Endothelial cell of umbilical vein (primary cell): ENCODE measurements at regions of chr14 and their contacts with region 1.

Region 1: DNA sequence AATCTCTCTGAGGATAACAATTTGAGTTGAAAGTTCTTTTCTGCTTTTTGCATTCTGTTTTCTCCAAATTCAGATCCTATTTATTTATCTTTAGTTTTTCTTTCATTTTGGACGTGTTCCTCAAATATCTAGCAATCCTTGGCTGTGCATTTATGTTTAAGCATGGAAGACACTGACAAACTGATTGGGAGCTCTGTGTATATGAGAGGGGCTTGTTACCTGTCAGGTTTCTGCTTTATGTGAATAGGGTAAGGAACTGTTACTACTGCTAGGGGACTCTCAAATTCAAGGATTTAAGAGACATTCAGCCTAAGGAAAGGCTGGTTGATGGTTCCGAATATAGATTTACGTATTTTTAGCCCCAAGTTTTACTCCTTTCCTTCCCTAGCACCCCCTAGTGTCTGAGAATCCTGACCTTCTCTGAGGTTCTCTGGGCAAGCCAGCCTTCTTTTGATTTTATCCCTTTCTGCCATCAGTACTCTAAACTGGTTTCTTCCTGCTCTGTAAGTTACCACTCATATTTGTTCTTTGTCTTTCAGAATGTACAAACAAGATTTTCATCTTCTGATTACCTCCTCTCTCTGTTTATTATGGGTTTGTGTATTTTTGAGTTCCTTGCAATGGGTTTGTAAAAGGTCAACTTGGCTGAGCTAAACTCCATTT is 30.5 kb downstream of the YLPM1 start:
- DNase-seq: peak; percentile 63
- H3K4me3 ChIP-seq: peak overlapping the region in 1 of 3 experiments; percentile 38
- H3K27ac ChIP-seq: peak overlapping the region; percentile 77
- H3K4me1 ChIP-seq: peaks cover 31% of the 10 kb centered on the region
- H3K27me3 ChIP-seq: no peaks in the 10 kb centered on the region
- CTCF ChIP-seq: peak; percentile 51 to 62
- POLR2A ChIP-seq: no peak

Region 2: GRCh38 chr14:74698465-74698864 is 95.2 kb before region 1 on chr14:
- CTCF ChIA-PET with region 1: no interaction called
- POLR2A ChIA-PET with region 1: no interaction called
- dilution Hi-C with region 1: no loop called
- intact Hi-C with region 1: no loop called
- DNase-seq: no peak
- H3K4me3 ChIP-seq: no peak overlapping the region
- H3K27ac ChIP-seq: no peak overlapping the region
- H3K4me1 ChIP-seq: no peaks in the 10 kb centered on the region
- H3K27me3 ChIP-seq: no peaks in the 10 kb centered on the region
- CTCF ChIP-seq: no peak
- POLR2A ChIP-seq: no peak

Region 3: DNA sequence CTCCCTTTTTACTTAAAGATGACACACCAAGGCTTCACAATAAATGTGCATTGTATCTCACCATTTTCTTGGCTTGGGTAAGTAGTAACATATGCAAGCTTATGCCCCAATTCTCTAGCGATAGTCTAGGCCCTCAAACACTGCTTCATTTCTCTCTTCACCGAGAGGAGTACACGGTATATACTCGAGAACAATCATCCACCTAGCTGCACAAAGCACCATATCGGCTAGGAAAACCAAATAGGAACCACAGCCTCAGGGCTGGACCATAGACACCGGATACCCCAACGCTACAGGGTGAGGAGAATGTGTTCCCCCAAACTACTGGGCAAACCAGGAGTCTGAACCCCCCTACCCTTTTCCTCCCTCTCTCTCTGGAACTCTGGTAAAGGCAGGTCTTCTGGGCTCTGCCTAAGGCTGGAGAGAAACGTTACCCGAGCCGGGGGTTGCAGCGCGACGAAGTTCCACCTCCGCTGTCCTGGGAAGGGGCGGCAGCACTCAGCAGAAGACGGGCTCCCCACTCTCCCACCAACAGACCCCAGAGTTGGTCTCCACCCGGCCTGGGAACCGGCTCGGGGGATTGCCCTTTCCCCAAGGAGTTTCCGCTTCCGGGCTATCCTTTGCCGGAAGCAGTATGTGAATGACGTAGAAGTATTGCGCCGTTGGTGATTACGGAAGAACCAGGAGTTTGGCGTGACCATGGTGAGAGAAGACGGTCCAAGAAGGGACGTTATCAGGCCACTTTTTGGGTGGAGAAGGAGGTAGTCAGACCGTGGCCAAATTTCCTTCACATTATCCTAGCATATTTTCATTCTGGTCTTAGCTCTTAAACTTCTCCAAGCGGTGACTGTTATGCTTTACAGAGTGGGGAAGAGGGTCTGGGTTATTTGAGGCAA is 80.9 kb before region 1 on chr14 and contains the starts of genes AREL1 and FCF1:
- CTCF ChIA-PET with region 1: no interaction called
- POLR2A ChIA-PET with region 1: no interaction called
- dilution Hi-C with region 1: no loop called
- intact Hi-C with region 1: loop called (anchors 5 kb)
- DNase-seq: peak; percentile 87
- H3K4me3 ChIP-seq: peak within 1 kb of the TSS; percentile 66 to 93 (median 92)
- H3K27ac ChIP-seq: peak within 1 kb of the TSS; percentile 37
- H3K4me1 ChIP-seq: peaks cover 15% of the 10 kb centered on the region
- H3K27me3 ChIP-seq: no peaks in the 10 kb centered on the region
- CTCF ChIP-seq: no peak
- POLR2A ChIP-seq: peak; percentile 75
- total RNA-seq, gene AREL1: 46.4 and 50.3 TPM in 2 replicates
- total RNA-seq, gene FCF1: 57.8 and 58.2 TPM in 2 replicates

Region 4: GRCh38 chr14:75018694-75019093 is 225.1 kb after region 1 on chr14:
- CTCF ChIA-PET with region 1: no interaction called
- POLR2A ChIA-PET with region 1: no interaction called
- dilution Hi-C with region 1: no loop called
- intact Hi-C with region 1: no loop called
- DNase-seq: no peak
- H3K4me3 ChIP-seq: no peak overlapping the region
- H3K27ac ChIP-seq: no peak overlapping the region
- H3K4me1 ChIP-seq: peaks cover 3% of the 10 kb centered on the region
- H3K27me3 ChIP-seq: no peaks in the 10 kb centered on the region
- CTCF ChIP-seq: no peak
- POLR2A ChIP-seq: no peak

Region 5: DNA sequence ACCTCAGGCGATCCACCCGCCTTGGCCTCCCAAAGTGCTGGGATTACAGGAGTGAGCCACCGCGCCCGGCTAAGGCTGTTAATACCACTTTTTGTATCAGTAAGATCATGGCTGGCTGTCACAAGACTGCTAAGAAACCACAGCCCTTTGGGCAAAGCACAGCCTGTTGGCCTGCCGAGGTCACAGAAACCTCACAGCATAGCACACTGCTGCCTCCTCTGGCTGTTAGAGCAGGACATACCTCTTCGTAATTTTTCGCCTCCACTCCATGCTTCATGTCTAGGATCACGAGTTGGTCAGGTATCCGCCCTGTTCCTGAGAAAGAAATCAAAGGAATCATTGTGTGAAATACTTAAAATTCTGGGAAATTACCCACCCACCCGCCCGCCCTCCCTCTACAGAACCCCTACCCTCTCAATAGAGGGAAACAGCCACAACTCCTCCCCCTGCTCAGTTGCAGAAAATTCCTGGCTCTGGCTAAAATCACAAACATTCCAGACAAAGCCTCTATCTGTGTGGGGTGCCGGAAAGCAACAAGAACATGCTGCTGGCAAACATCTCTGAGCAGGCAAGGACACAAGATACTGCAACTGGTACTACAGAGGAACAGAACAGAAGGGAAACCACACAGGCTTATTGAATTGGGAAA is 353.9 kb after region 1 on chr14:
- CTCF ChIA-PET with region 1: no interaction called
- POLR2A ChIA-PET with region 1: no interaction called
- dilution Hi-C with region 1: no loop called
- intact Hi-C with region 1: no loop called
- DNase-seq: peak; percentile 66
- H3K4me3 ChIP-seq: no peak overlapping the region
- H3K27ac ChIP-seq: peak overlapping the region; percentile 22
- H3K4me1 ChIP-seq: no peaks in the 10 kb centered on the region
- H3K27me3 ChIP-seq: no peaks in the 10 kb centered on the region
- CTCF ChIP-seq: peak; percentile 17 to 60
- POLR2A ChIP-seq: no peak